Gastrocnemius medialis (tissue), 4 donors: ENCODE measurements at regions of chr16 and their contacts with region 1.

Region 1: GRCh38 chr16:85151603-85152413 is 39.5 kb upstream of the CIBAR2 start:
- DNase-seq: peak; percentile 58 to 86
- ATAC-seq: peak; percentile 0 to 16
- H3K4me3 ChIP-seq: no peak overlapping the region
- H3K27ac ChIP-seq: peak overlapping the region; percentile 88 to 99 (median 94)
- H3K4me1 ChIP-seq: peaks cover 67 to 74% of the 10 kb centered on the region in 2 donors
- H3K27me3 ChIP-seq: no peaks in the 10 kb centered on the region
- CTCF ChIP-seq: no peak
- POLR2A ChIP-seq: peak; percentile 49 to 54

Region 2: GRCh38 chr16:85126705-85127419 is 24.9 kb before region 1 on chr16:
- in situ Hi-C with region 1: no loop called
- intact Hi-C with region 1: loop called (anchors 1 kb)
- DNase-seq: peak; percentile 78 to 89
- ATAC-seq: peak; percentile 47 to 62
- H3K4me3 ChIP-seq: peak overlapping the region; percentile 2 to 27 (median 14)
- H3K27ac ChIP-seq: peak overlapping the region; percentile 89 to 98 (median 92)
- H3K4me1 ChIP-seq: peaks cover 48 to 57% of the 10 kb centered on the region in 2 donors
- H3K27me3 ChIP-seq: no peaks in the 10 kb centered on the region
- CTCF ChIP-seq: peak in 1 of 5 experiments; percentile 22
- POLR2A ChIP-seq: peak in 1 of 2 donors; percentile 21

Region 3: GRCh38 chr16:85162478-85163277 is 10.9 kb after region 1 on chr16:
- in situ Hi-C with region 1: no loop called
- intact Hi-C with region 1: loop called (anchors 1 kb)
- DNase-seq: peak; percentile 76 to 86
- ATAC-seq: peak; percentile 80 to 84
- H3K4me3 ChIP-seq: peak overlapping the region in 2 of 4 donors; percentile 14 to 32
- H3K27ac ChIP-seq: peak overlapping the region; percentile 87 to 94 (median 92)
- H3K4me1 ChIP-seq: peaks cover 55 to 71% of the 10 kb centered on the region in 2 donors
- H3K27me3 ChIP-seq: no peaks in the 10 kb centered on the region
- CTCF ChIP-seq: no peak
- POLR2A ChIP-seq: no peak